OCI-LY7 (cell line): ENCODE measurements at regions of chr6 and their contacts with region 1.

Region 1: DNA sequence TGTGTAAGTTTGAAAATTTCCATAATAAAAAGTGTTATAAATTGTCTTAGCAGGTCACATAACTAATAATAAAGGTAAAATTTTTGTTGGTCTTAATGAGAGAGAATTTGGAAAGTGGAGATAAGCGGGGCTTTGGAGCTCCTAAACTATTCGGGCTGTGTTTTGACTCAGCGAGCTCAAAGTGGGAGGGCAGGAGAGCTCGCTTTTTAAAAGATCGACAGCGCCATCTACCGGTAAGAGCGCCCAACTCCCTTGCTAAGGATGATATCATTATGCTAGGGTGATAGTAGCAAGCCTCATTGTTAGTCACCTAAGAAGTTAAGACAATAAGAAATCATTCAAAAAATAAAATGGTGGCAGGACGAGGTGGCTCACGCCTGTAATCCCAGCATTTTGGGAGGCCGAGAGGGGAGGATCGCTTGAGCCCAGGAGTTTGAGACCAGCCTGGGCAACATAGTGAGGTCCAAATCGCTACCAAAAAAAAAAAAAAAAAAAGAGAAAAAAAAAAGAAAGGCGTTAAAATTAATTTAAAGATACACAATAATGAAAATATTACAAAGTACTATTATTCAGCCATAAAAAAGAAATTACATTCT is 24.8 kb downstream of the C6orf15 start:
- DNase-seq: peak; percentile 83
- H3K4me3 ChIP-seq: no peak overlapping the region
- H3K27ac ChIP-seq: no peak overlapping the region
- H3K4me1 ChIP-seq: no peaks in the 10 kb centered on the region
- CTCF ChIP-seq: peak; percentile 85

Region 2: GRCh38 chr6:30821862-30822782 is 265.5 kb before region 1 on chr6:
- CTCF ChIA-PET with region 1: interaction called, 7 read pairs
- POLR2A ChIA-PET with region 1: no interaction called
- intact Hi-C with region 1: loop called (anchors 2 kb)
- DNase-seq: peak; percentile 62
- H3K4me3 ChIP-seq: no peak overlapping the region
- H3K27ac ChIP-seq: no peak overlapping the region
- H3K4me1 ChIP-seq: no peaks in the 10 kb centered on the region
- CTCF ChIP-seq: peak; percentile 86

Region 3: GRCh38 chr6:30828027-30828960 is 259.3 kb before region 1 on chr6:
- CTCF ChIA-PET with region 1: interaction called, 5 read pairs
- POLR2A ChIA-PET with region 1: no interaction called
- intact Hi-C with region 1: loop called (anchors 2 kb)
- DNase-seq: peak; percentile 77
- H3K4me3 ChIP-seq: no peak overlapping the region
- H3K27ac ChIP-seq: no peak overlapping the region
- H3K4me1 ChIP-seq: peaks cover 11% of the 10 kb centered on the region
- CTCF ChIP-seq: peak; percentile 96

Region 4: GRCh38 chr6:30914076-30914853 is 173.3 kb before region 1 on chr6 and contains the start of gene VARS2:
- CTCF ChIA-PET with region 1: interaction called, 3 read pairs
- POLR2A ChIA-PET with region 1: interaction called, 5 read pairs
- intact Hi-C with region 1: loop called (anchors 2 kb)
- DNase-seq: peak; percentile 87
- H3K4me3 ChIP-seq: peak within 1 kb of the TSS; percentile 76
- H3K27ac ChIP-seq: peak within 1 kb of the TSS; percentile 63
- H3K4me1 ChIP-seq: peaks cover 23% of the 10 kb centered on the region
- CTCF ChIP-seq: peak; percentile 44
- total RNA-seq, gene VARS2: 71.4 and 81.8 TPM in 2 replicates